GM13976 (cell line): ENCODE measurements at regions of chr4 and their contacts with region 1.

Region 1: DNA sequence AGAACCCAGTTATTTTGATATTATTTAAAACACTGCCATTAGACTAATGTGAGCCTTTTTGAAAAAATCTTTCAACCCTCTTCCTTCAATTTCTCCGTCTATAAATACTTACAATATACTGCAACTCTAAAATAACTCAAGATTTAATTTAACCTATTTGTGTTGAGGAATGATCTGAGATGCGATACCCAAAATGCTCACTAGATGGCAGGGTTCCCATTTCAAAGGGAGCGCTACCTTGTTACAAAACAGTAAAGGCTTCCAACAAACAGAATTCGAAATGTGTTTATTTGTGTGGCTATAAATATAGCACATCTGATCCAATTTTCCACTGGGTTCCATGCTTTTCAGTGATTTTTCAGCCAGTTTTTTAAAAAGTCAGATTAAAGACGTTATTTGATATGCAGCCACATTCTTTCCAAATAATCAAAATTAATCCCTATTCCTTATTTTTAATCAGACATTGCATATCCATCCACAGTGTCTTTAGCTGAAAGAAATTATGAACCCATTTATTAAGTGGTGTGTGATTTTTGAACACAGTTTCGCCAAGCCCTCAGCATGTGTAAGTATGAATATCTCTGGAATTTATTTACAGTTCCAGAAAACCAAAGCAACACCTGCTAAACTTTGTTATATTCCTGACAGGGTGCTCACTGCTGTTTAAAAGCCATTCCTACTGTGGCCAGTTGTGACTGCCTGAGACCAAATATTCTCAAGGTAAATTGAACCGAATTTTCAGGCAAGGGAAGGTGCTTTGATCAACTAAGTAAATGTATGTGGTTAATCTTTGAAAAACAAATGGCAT is 668.0 kb upstream of the LCORL start:
- DNase-seq: peak; percentile 12
- CTCF ChIP-seq: peak; percentile 66

Region 2: GRCh38 chr4:18033111-18034085 is 656.1 kb before region 1 on chr4:
- in situ Hi-C with region 1: no loop called
- DNase-seq: no peak
- CTCF ChIP-seq: no peak

Region 3: DNA sequence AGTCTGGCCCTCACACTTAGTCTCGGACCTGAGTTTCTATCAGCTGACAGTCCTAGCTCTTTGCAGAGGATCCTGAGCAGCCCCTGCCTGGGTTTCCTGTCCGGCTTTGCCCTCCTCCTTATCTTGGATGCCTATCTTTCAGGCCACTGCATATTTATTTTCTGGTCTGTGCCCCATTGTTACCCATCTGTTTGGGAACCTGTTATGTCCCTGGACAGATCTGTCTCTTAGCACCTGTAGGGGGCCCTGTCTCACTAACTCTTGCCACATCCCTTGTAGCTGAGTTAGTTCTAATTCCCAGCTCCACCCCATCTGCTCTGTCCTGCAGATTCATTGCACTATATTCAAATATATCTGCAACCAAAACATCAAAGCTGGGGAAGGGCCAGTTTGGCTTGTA is 153.1 kb before region 1 on chr4:
- in situ Hi-C with region 1: no loop called
- DNase-seq: no peak
- CTCF ChIP-seq: no peak

Region 4: DNA sequence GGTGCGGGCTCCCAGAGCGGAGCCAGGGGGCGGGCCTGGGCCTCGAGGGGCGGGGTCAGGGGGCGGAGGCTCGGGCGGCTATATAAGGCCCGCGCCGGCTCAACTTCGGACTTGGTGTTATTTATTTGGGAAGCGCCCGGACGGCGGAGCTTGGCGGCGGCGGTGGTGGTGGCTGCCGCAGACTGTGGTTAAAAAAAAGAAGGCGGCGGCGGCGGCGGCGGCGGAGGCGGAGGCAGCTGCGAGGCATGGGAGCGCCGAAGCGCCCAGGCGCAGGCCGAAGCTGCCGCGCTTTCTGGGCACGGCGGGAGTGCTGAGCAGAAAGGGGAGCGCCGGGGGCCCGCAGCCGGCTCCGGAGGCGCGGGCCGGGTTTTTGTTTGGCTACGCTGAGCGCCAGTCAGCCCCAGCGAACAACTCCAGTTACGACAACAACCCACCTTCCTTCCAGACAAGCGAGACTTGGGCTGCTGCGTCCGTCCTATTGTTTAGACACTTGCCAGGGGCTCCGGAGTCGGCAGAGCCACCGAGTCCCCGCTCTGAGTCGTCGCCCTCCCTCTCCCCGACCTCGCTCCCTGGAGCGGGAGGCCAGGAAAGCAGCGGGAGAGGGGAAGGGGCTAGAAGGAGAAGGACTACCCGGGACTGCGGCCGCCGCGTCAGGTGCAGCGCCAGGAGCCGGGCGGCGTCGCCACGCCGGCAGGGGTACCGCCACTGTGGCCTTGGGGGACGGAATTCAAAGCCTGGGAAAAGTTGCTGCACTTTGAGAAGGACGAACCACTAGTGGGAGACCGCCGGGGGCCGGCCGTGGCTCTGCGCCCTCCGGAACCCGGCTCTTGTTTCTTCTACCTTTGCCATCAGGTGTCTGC is 1562.5 kb after region 1 on chr4 and contains the start of gene SLIT2:
- in situ Hi-C with region 1: loop called (anchors 25 kb)
- DNase-seq: peak; percentile 82
- CTCF ChIP-seq: no peak

Region 5: GRCh38 chr4:20684852-20685763 is 1995.6 kb after region 1 on chr4:
- in situ Hi-C with region 1: loop called (anchors 25 kb)
- DNase-seq: peak; percentile 27
- CTCF ChIP-seq: peak; percentile 26